IMR-90 (cell line): ENCODE measurements at regions of chr5 and their contacts with region 1.

Region 1: GRCh38 chr5:156865427-156865826 is 15.3 kb downstream of the PPP1R2B start:
- DNase-seq: no peak
- ATAC-seq: no peak
- H3K4me3 ChIP-seq: no peak overlapping the region
- H3K27ac ChIP-seq: no peak overlapping the region
- H3K4me1 ChIP-seq: no peaks in the 10 kb centered on the region
- H3K27me3 ChIP-seq: no peaks in the 10 kb centered on the region
- CTCF ChIP-seq: no peak
- POLR2A ChIP-seq: no peak
- RAD21 ChIP-seq: no peak

Region 2: GRCh38 chr5:157486221-157486681 is 620.8 kb after region 1 on chr5:
- CTCF ChIA-PET with region 1: no interaction called
- POLR2A ChIA-PET with region 1: interaction called, 10 read pairs
- dilution Hi-C with region 1: no loop called
- in situ Hi-C with region 1: no loop called
- intact Hi-C with region 1: no loop called
- DNase-seq: no peak
- ATAC-seq: no peak
- H3K4me3 ChIP-seq: no peak overlapping the region
- H3K27ac ChIP-seq: no peak overlapping the region
- H3K4me1 ChIP-seq: peaks cover 2% of the 10 kb centered on the region; the same call in 1 of the 2 replicates
- H3K27me3 ChIP-seq: no peaks in the 10 kb centered on the region
- CTCF ChIP-seq: no peak
- POLR2A ChIP-seq: no peak
- RAD21 ChIP-seq: no peak